ENCODE measurements at regions of chr17 and their contacts with region 1.

Region 1: GRCh38 chr17:77066165-77066564 is 74.6 kb upstream of the SEC14L1 start:
- DNase-seq: no peak

Region 2: GRCh38 chr17:76868176-76868668 is 197.9 kb before region 1 on chr17 and contains the start of gene MGAT5B:
- intact Hi-C with region 1: loop called (anchors 1 kb)
- DNase-seq: peak; percentile 51 to 96 (median 76)

Region 3: GRCh38 chr17:77011173-77012011 is 54.8 kb before region 1 on chr17:
- intact Hi-C with region 1: no loop called
- DNase-seq: peak in 4 of 10 donors; percentile 27 to 58 (median 52)

Region 4: GRCh38 chr17:77227461-77228237 is 161.5 kb after region 1 on chr17:
- intact Hi-C with region 1: no loop called
- DNase-seq: peak in 2 of 10 donors; percentile 67 to 82

Measured in posterior cingulate gyrus (tissue), 11 donors.